Activated CD4-positive, alpha-beta memory T cell treated with anti-CD3 and anti-CD28 coated beads for 36 hours (primary cell): ENCODE measurements at regions of chr17 and their contacts with region 1.

Region 1: GRCh38 chr17:77140166-77140878 is 447 bp upstream of the SEC14L1 start:
- DNase-seq: peak; percentile 100
- H3K4me3 Mint-ChIP-seq: peak overlapping the region; percentile 69
- H3K27ac Mint-ChIP-seq: peak overlapping the region; percentile 98
- H3K4me1 Mint-ChIP-seq: peaks cover 52% of the 10 kb centered on the region
- H3K27me3 Mint-ChIP-seq: no peaks in the 10 kb centered on the region

Region 2: DNA sequence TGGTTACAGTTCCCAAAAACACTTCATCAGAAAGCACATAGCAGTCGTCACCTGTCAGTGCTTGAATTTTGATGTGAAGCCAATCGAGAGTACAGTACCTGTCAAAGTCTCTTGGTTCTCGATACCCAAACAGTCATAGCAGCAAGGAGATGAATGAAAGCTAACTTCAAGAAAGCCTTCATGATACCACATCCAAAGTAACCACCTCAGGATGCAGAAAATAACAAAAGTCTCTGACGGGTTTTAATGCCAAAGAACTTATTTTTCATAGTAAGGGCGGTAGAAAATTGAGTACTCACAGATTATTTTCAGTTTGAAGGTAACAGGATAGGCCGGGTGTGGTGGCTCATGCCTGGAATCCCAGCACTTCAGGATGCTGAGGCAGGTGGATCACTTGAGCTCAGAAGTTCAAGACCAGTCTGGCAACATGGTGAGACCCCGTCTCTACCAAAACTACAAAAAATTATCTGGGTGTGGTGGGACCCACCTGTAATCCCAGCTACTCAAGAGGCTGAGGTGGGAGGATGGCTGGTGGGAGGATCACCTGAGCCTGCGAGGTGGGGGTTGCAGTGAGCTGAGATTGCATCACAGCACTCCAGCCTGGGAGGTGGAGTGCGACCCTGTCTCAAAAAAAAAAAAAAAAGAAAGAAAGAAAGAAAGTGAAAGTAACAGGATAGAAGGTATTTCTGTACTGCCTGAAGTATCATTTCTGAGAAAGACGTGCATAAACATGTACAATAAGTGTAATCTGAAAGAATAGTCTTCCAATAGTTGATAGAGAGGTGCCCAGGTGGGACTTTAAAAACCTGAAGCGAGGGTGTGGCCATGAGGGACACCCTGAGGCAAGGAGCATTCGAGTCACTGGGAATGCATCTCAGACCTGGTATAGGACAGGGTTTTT is 387.0 kb before region 1 on chr17:
- CTCF ChIA-PET with region 1: no interaction called
- POLR2A ChIA-PET with region 1: no interaction called
- intact Hi-C with region 1: loop called (anchors 5 kb)
- DNase-seq: peak; percentile 52
- H3K4me3 Mint-ChIP-seq: peak overlapping the region; percentile 80
- H3K27ac Mint-ChIP-seq: peak overlapping the region; percentile 97
- H3K4me1 Mint-ChIP-seq: peaks cover 25% of the 10 kb centered on the region
- H3K27me3 Mint-ChIP-seq: no peaks in the 10 kb centered on the region

Region 3: DNA sequence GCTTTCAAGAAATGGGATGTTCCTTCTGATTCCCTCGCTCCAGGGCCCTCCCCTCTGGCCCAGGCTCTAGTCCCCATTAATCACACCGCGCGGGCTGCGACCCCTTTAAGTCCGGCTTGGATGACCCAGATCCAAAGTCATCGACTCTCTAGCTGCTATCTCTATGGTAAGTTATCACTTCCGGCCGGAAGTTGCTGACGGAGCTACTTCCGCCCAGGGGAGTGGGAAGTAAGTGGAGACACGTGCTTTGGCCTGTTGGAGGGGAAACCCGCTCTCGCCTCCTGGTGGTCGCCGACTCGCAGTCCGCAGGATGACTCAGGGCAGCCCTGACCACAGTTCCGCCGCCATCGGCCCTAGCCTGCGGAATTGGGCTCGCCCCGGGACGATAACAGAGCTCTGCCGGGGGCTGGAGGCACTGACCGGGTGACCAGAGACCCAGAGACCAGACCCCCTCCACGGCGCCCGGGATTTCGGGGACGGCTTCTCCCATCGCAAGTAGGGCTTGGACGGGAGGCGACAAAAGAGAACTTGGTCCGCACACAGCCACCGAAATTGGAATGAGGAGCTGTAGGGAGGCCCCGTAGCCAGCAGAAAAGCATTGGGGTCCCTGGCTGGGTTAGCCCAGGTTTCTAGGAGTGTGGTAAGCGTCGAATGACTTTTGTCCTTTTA is 51.7 kb before region 1 on chr17:
- CTCF ChIA-PET with region 1: interaction called, 12 read pairs
- POLR2A ChIA-PET with region 1: interaction called, 24 read pairs
- intact Hi-C with region 1: loop called (anchors 1 kb)
- DNase-seq: peak; percentile 92
- H3K4me3 Mint-ChIP-seq: peak overlapping the region; percentile 89
- H3K27ac Mint-ChIP-seq: peak overlapping the region; percentile 94
- H3K4me1 Mint-ChIP-seq: peaks cover 53% of the 10 kb centered on the region
- H3K27me3 Mint-ChIP-seq: no peaks in the 10 kb centered on the region

Region 4: GRCh38 chr17:77096570-77097214 is 43.6 kb before region 1 on chr17:
- CTCF ChIA-PET with region 1: no interaction called
- POLR2A ChIA-PET with region 1: interaction called, 6 read pairs
- intact Hi-C with region 1: loop called (anchors 2 kb)
- DNase-seq: no peak
- H3K4me3 Mint-ChIP-seq: no peak overlapping the region
- H3K27ac Mint-ChIP-seq: peak overlapping the region; percentile 76
- H3K4me1 Mint-ChIP-seq: peaks cover 32% of the 10 kb centered on the region
- H3K27me3 Mint-ChIP-seq: no peaks in the 10 kb centered on the region

Region 5: DNA sequence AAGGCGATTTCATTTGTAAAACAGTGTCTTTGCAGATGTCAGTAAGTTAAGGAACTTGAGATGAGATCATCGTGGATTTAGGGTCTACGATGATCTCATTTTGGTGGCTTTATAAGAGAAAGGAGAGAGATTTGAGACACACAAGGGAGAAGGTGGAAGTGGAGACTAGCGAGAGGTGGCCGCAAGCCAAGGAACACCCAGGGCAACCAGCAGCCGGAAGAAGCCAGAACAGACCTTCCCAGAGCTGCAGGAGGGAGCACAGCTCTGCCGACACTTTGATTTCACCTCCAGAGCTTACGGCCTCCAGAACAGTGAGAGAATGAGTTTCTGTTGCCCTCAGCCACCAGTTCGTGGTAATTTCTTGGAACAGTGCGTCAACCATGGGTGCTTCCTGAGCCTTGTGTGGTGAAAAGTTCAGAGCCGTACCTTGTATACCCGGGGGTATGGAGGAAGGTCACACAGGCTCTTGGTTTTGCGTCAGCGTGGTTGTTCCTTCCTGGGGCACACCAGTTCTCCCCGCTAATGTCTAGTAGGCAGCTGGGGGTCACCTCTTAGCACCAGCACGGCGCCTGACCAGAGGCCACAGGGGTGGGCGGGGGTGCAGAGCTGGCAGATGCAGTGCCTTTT is 12.5 kb before region 1 on chr17:
- CTCF ChIA-PET with region 1: interaction called, 9 read pairs
- POLR2A ChIA-PET with region 1: interaction called, 63 read pairs
- intact Hi-C with region 1: loop called (anchors 1 kb)
- DNase-seq: peak; percentile 87
- H3K4me3 Mint-ChIP-seq: peak overlapping the region; percentile 55
- H3K27ac Mint-ChIP-seq: peak overlapping the region; percentile 91
- H3K4me1 Mint-ChIP-seq: peaks cover 28% of the 10 kb centered on the region
- H3K27me3 Mint-ChIP-seq: no peaks in the 10 kb centered on the region

Region 6: DNA sequence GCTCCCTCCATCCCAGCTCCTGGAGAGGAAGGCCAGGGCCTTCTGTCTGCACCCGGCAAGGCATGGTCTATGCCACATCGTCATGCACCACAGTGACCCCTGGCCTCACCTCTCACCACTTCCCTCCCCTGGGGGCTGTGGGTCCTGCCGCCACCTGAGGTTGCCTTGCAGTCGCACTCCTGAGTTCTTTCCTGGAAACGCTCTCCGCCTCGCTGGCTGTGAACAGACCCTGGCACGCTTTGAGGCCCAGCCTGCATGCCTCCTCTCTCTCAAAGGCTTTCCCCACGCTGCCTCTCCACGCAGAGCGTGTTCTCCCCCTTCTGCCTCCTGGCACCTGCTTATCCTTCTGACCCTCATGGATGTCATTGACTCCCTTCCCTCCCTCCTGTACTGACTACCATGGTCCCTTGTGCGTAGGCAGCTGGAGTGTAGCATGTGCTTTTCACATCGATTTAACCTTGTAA is 45.9 kb after region 1 on chr17:
- CTCF ChIA-PET with region 1: interaction called, 8 read pairs
- POLR2A ChIA-PET with region 1: interaction called, 4 read pairs
- intact Hi-C with region 1: loop called (anchors 2 kb)
- DNase-seq: peak; percentile 34
- H3K4me3 Mint-ChIP-seq: no peak overlapping the region
- H3K27ac Mint-ChIP-seq: no peak overlapping the region
- H3K4me1 Mint-ChIP-seq: peaks cover 48% of the 10 kb centered on the region
- H3K27me3 Mint-ChIP-seq: no peaks in the 10 kb centered on the region

Region 7: GRCh38 chr17:77235370-77235941 is 95.1 kb after region 1 on chr17:
- CTCF ChIA-PET with region 1: no interaction called
- POLR2A ChIA-PET with region 1: interaction called, 13 read pairs
- intact Hi-C with region 1: loop called (anchors 1 kb)
- DNase-seq: peak; percentile 66
- H3K4me3 Mint-ChIP-seq: peak overlapping the region; percentile 59
- H3K27ac Mint-ChIP-seq: peak overlapping the region; percentile 66
- H3K4me1 Mint-ChIP-seq: peaks cover 19% of the 10 kb centered on the region
- H3K27me3 Mint-ChIP-seq: no peaks in the 10 kb centered on the region